ENCODE measurements at regions of chr5 and their contacts with region 1.

Region 1: DNA sequence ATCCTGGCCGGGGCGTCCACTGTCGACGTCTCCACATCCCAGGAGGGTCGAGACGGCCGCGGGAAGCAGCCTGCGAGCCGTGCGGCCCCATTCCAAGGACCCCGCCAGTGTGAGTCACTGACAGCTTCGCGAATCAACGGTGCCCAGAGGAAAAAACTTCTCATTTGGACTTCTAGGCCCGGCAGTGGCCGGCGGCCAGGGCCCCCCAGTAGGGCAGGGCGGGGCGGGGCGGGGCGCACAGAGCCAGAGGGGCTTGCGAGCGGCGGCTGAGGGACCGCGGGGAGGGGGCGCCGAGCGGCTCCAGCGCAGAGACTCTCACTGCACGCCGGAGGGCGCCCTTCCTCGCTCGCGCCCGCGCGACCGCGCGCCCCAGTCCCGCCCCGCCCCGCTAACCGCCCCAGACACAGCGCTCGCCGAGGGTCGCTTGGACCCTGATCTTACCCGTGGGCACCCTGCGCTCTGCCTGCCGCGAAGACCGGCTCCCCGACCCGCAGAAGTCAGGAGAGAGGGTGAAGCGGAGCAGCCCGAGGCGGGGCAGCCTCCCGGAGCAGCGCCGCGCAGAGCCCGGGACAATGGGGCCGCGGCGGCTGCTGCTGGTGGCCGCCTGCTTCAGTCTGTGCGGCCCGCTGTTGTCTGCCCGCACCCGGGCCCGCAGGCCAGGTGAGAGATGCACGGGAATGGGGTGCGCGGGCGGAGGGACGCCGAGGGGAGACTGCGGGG is at the start of gene F2R:
- DNase-seq: peak; percentile 94
- H3K4me3 ChIP-seq: peak within 1 kb of the TSS; percentile 81 to 100 (median 99)
- H3K27ac ChIP-seq: peak within 1 kb of the TSS; percentile 89
- H3K4me1 ChIP-seq: peaks cover 30% of the 10 kb centered on the region
- H3K27me3 ChIP-seq: no peaks in the 10 kb centered on the region
- CTCF ChIP-seq: peak; percentile 44 to 74
- POLR2A ChIP-seq: no peak
- total RNA-seq, gene F2R: 342 and 393 TPM in 2 replicates

Region 2: GRCh38 chr5:76625087-76625815 is 90.6 kb before region 1 on chr5:
- CTCF ChIA-PET with region 1: no interaction called
- POLR2A ChIA-PET with region 1: no interaction called
- dilution Hi-C with region 1: no loop called
- intact Hi-C with region 1: loop called (anchors 1 kb)
- DNase-seq: peak; percentile 80
- H3K4me3 ChIP-seq: no peak overlapping the region
- H3K27ac ChIP-seq: peak overlapping the region; percentile 59
- H3K4me1 ChIP-seq: peaks cover 17% of the 10 kb centered on the region
- H3K27me3 ChIP-seq: no peaks in the 10 kb centered on the region
- CTCF ChIP-seq: no peak
- POLR2A ChIP-seq: no peak

Region 3: GRCh38 chr5:76660360-76660759 is 55.5 kb before region 1 on chr5:
- CTCF ChIA-PET with region 1: no interaction called
- POLR2A ChIA-PET with region 1: interaction called, 3 read pairs
- dilution Hi-C with region 1: no loop called
- intact Hi-C with region 1: loop called (anchors 1 kb)
- DNase-seq: peak; percentile 65
- H3K4me3 ChIP-seq: peak overlapping the region in 1 of 3 experiments; percentile 5
- H3K27ac ChIP-seq: peak overlapping the region; percentile 6
- H3K4me1 ChIP-seq: peaks cover 44% of the 10 kb centered on the region
- H3K27me3 ChIP-seq: no peaks in the 10 kb centered on the region
- CTCF ChIP-seq: no peak
- POLR2A ChIP-seq: no peak

Region 4: DNA sequence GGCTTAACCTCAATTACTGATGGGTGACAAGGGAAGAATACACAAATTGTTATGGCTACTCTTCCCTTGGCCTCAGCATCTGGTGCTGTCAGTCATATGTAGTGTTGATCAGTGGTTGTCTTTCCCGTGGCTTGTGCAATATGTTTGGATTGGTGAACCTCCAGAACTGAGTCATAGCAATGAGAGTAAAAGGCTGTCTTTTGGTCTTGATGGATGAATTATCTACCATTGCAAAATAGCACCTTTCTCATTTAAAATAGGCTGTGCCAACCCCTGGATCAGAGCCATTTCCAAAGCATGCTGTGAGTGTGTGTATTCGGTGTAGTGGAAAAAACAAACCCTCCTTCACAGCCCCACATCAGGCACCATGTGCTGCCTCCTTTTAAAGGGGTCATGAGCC is 14.6 kb before region 1 on chr5:
- CTCF ChIA-PET with region 1: interaction called, 14 read pairs
- POLR2A ChIA-PET with region 1: no interaction called
- dilution Hi-C with region 1: no loop called
- intact Hi-C with region 1: loop called (anchors 1 kb)
- DNase-seq: peak; percentile 45
- H3K4me3 ChIP-seq: no peak overlapping the region
- H3K27ac ChIP-seq: no peak overlapping the region
- H3K4me1 ChIP-seq: peaks cover 53% of the 10 kb centered on the region
- H3K27me3 ChIP-seq: no peaks in the 10 kb centered on the region
- CTCF ChIP-seq: no peak
- POLR2A ChIP-seq: no peak

Region 5: DNA sequence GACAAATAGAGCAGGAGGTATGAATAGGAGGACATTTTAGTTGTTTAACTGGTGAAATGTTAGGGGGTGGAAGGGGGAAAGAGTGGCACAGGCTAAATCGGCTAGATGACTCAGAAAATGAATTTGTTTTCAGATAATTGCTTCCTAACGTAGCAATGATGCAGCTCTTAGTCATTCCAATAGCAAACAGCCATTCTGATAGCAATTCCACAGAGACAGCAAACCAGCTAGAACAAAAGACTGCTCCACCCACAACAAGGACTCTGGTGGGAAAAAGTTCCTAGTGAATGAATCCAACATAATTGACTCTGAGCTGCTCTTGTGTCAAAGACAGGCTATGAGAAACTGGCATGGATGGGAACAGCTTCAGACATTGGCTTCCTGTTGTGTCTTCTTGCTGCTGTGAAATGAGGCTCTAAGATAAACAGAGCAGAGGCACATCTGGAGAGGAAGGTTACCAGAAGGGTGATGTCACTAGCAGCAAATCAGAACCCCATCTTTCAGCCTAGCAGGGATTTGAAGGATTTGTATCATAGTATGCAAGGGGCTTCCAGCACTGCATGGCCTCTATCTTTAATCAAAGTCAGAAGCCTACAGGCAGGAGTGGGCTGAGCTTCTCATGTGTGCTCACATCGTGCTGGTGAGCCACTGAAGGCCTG is 74.9 kb after region 1 on chr5:
- CTCF ChIA-PET with region 1: no interaction called
- POLR2A ChIA-PET with region 1: no interaction called
- dilution Hi-C with region 1: no loop called
- intact Hi-C with region 1: loop called (anchors 1 kb)
- DNase-seq: peak; percentile 98
- H3K4me3 ChIP-seq: no peak overlapping the region
- H3K27ac ChIP-seq: peak overlapping the region; percentile 94
- H3K4me1 ChIP-seq: peaks cover 55% of the 10 kb centered on the region
- H3K27me3 ChIP-seq: no peaks in the 10 kb centered on the region
- CTCF ChIP-seq: no peak
- POLR2A ChIP-seq: peak; percentile 31

Region 6: DNA sequence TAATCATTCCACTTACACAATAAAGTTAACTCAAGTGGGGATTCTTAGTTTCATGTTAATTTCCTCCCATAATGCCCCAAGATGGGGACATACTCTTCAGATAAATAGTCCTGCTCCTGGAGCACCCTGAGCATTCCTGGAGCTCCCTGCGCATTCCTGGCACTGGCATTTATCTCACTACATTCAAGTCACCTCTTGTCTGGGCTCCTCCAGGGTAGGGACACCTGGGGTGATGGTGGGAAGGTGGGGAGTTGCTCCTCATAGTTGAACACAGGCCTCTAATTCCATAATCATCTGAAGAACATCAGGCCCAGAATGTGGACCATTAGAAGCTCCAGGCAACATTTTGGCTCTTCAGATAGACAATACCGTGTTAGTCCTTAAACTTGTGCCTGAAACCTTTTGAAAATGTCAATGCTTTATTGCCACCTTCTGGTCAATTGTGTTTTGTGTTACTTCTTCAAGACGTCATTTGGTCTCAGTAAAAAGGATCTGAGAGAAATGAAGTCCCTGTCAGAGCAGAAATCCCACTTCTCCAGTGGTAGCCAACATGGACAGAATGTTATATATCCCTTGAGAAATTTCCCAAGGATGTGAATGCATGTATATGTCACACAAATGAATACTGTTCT is 300.2 kb after region 1 on chr5:
- CTCF ChIA-PET with region 1: no interaction called
- POLR2A ChIA-PET with region 1: no interaction called
- dilution Hi-C with region 1: no loop called
- intact Hi-C with region 1: loop called (anchors 1 kb)
- DNase-seq: peak; percentile 66
- H3K4me3 ChIP-seq: no peak overlapping the region
- H3K27ac ChIP-seq: no peak overlapping the region
- H3K4me1 ChIP-seq: no peaks in the 10 kb centered on the region
- H3K27me3 ChIP-seq: peaks cover 13 to 14% of the 10 kb centered on the region in 2 experiments
- CTCF ChIP-seq: peak; percentile 9 to 18
- POLR2A ChIP-seq: no peak